ENCODE measurements at regions of chr7 and their contacts with region 1.

Region 1: GRCh38 chr7:139230774-139231512 is at the start of gene UBN2:
- DNase-seq: peak; percentile 97
- H3K4me3 ChIP-seq: peak within 1 kb of the TSS; percentile 97 to 99 (median 98)
- H3K27ac ChIP-seq: peak within 1 kb of the TSS; percentile 90
- H3K4me1 ChIP-seq: peaks cover 11% of the 10 kb centered on the region
- H3K27me3 ChIP-seq: no peaks in the 10 kb centered on the region
- CTCF ChIP-seq: no peak
- total RNA-seq, gene UBN2: 7.3 to 11.9 TPM

Region 2: DNA sequence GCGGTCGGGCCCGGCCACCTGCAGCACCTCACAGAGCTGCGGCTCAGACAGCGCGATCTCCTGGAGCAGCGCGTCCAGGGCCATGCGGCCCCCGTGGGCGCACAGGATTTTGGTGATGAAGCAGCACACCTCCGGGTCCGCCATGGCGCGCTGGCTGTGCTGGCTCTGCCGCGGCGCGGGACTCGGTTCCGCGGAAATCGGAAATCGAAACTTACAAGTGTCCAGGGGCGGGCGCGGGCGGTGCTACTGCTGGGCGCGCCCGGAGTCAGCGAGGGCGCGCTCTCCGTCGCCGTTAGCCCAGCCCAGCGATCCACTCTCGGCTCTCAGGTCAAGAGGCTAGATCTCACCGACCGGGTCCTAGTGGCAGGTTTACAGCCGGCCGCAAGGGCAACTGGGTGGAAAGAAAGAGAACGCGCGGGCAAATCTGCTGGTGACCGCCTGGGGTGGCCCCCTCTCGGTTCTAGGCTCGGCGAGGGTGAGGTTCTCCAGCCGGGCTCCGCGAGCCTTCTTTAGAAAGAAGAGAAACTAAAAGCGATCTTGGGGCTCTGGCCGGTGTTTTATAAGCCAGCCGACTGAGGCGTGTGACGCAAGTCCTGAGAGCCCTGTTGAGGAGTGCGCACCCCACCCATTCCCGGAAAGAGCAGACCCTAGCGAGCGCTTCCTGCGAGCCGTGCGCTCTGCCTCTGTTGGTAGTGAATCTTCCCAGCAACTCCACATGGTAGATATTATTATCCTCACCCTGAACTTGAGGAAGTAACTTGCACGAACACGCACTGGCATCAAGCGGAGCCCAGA is 121.6 kb before region 1 on chr7 and contains the start of gene ZC3HAV1:
- CTCF ChIA-PET with region 1: no interaction called
- dilution Hi-C with region 1: no loop called
- in situ Hi-C with region 1: loop called in 1 of 2 experiments (anchors 10 kb)
- intact Hi-C with region 1: loop called (anchors 2 kb)
- DNase-seq: peak; percentile 86
- H3K4me3 ChIP-seq: peak within 1 kb of the TSS; percentile 75 to 92 (median 80)
- H3K27ac ChIP-seq: peak within 1 kb of the TSS; percentile 87
- H3K4me1 ChIP-seq: peaks cover 22% of the 10 kb centered on the region
- H3K27me3 ChIP-seq: no peaks in the 10 kb centered on the region
- CTCF ChIP-seq: no peak
- total RNA-seq, gene ZC3HAV1: 23.6 to 50.5 TPM

Region 3: GRCh38 chr7:139118234-139118804 is 112.6 kb before region 1 on chr7:
- CTCF ChIA-PET with region 1: no interaction called
- dilution Hi-C with region 1: no loop called
- in situ Hi-C with region 1: loop called in 1 of 2 experiments (anchors 10 kb)
- intact Hi-C with region 1: no loop called
- DNase-seq: peak; percentile 85
- H3K4me3 ChIP-seq: no peak overlapping the region
- H3K27ac ChIP-seq: no peak overlapping the region
- H3K4me1 ChIP-seq: peaks cover 19% of the 10 kb centered on the region
- H3K27me3 ChIP-seq: no peaks in the 10 kb centered on the region
- CTCF ChIP-seq: peak; percentile 13 to 27

Region 4: DNA sequence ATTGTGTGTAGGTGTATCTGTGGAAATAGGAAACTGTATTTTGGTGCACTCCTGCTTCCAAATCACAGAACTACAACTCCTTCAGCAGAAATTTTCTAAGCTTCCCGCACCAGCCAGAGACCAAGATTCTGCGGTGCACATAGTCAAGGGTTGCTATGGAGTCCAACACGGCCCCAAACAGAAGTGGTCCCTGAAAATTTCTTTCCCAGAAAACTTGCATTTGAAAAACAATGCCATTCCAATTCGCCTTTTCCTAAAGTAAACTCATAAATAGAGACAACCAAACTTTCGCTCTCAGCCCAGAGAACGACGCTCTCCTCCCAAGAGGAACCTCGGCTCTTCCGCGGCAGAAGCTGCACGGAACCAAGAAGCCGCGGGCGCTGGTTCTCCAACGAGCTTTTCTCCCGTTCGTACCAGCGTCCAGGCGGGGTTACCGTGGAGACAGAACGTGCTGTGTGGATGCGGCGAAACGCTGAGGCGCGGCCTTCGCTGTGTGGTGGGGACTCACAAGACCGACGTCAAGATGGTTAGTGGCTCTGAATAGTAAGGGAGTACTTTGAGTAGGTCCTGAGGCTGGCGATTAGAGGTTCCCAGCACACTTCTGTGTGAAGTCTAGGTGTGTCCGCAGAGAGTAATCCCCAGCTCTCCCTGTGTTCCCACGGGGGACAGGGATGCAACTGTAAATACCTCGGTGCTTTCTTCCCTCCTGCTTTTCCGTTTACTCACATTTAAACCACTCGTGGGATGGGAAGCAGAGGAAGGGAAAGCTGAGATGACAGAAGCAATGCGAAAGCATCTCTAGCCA is 97.4 kb before region 1 on chr7:
- CTCF ChIA-PET with region 1: no interaction called
- dilution Hi-C with region 1: no loop called
- in situ Hi-C with region 1: no loop called
- intact Hi-C with region 1: loop called (anchors 1 kb)
- DNase-seq: peak; percentile 87
- H3K4me3 ChIP-seq: peak overlapping the region; percentile 61 to 88 (median 72)
- H3K27ac ChIP-seq: peak overlapping the region; percentile 77
- H3K4me1 ChIP-seq: no peaks in the 10 kb centered on the region
- H3K27me3 ChIP-seq: no peaks in the 10 kb centered on the region
- CTCF ChIP-seq: no peak

Region 5: GRCh38 chr7:139340037-139340807 is 109.3 kb after region 1 on chr7:
- CTCF ChIA-PET with region 1: no interaction called
- dilution Hi-C with region 1: no loop called
- in situ Hi-C with region 1: no loop called
- intact Hi-C with region 1: loop called (anchors 1 kb)
- DNase-seq: peak; percentile 99
- H3K4me3 ChIP-seq: peak overlapping the region; percentile 73 to 90 (median 87)
- H3K27ac ChIP-seq: peak overlapping the region; percentile 99
- H3K4me1 ChIP-seq: peaks cover 7% of the 10 kb centered on the region
- H3K27me3 ChIP-seq: no peaks in the 10 kb centered on the region
- CTCF ChIP-seq: peak; percentile 59 to 74

Region 6: DNA sequence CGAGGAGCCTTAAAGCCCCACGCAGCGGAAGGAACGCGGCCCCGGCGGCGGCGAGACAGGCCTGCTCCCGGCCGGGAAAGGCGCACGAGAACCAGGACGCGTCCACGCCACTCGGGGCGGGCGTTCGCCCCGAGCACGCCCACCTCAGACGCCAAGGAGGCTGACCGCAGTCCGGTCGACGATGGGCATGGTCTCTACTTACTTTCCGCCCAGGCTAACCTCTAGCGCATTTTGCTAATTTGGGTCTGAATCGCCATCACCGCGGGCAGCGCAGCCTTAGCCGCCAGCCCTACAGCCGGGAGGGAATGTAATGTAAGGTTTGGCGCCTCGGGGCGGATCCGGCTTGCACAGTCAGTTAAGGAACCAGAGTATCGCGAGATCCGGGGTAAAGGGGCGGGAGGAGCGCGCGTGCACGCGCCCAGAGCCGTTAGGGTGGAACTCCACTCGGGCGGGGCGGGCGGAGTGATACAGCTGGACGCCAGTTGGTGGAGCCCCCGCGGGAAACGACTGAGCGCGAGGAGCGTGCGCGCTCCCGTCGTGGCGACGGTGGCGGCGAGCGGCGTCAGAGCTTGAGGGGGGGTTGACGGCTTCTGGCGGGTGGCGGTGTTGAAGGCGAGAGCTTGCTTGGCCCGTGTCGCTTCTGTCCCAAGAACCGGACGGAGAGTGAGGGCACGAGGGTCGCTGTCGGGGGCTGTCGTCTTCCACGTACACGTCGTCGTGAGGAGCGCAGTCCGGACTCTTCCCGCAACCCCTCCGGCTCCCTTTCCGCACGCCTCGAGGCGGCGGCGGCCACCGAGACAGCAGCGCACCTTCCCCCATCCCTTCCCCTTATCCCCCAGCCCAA is 128.6 kb after region 1 on chr7 and contains the start of gene LUC7L2:
- CTCF ChIA-PET with region 1: no interaction called
- dilution Hi-C with region 1: no loop called
- in situ Hi-C with region 1: no loop called
- intact Hi-C with region 1: loop called (anchors 1 kb)
- DNase-seq: peak; percentile 98
- H3K4me3 ChIP-seq: peak within 1 kb of the TSS; percentile 93 to 100 (median 99)
- H3K27ac ChIP-seq: peak within 1 kb of the TSS; percentile 92
- H3K4me1 ChIP-seq: peaks cover 16% of the 10 kb centered on the region
- H3K27me3 ChIP-seq: no peaks in the 10 kb centered on the region
- CTCF ChIP-seq: peak in 1 of 2 donors; percentile 1
- total RNA-seq, gene LUC7L2: 44.0 to 110 TPM

Region 7: GRCh38 chr7:139620676-139621344 is 389.9 kb after region 1 on chr7:
- CTCF ChIA-PET with region 1: interaction called, 10 read pairs
- dilution Hi-C with region 1: no loop called
- in situ Hi-C with region 1: no loop called
- intact Hi-C with region 1: no loop called
- DNase-seq: peak; percentile 40
- H3K4me3 ChIP-seq: no peak overlapping the region
- H3K27ac ChIP-seq: no peak overlapping the region
- H3K4me1 ChIP-seq: no peaks in the 10 kb centered on the region
- H3K27me3 ChIP-seq: no peaks in the 10 kb centered on the region
- CTCF ChIP-seq: peak; percentile 78 to 81

Measured in mammary epithelial cell (primary cell).